ENCODE measurements at regions of chr16 and their contacts with region 1.

Region 1: DNA sequence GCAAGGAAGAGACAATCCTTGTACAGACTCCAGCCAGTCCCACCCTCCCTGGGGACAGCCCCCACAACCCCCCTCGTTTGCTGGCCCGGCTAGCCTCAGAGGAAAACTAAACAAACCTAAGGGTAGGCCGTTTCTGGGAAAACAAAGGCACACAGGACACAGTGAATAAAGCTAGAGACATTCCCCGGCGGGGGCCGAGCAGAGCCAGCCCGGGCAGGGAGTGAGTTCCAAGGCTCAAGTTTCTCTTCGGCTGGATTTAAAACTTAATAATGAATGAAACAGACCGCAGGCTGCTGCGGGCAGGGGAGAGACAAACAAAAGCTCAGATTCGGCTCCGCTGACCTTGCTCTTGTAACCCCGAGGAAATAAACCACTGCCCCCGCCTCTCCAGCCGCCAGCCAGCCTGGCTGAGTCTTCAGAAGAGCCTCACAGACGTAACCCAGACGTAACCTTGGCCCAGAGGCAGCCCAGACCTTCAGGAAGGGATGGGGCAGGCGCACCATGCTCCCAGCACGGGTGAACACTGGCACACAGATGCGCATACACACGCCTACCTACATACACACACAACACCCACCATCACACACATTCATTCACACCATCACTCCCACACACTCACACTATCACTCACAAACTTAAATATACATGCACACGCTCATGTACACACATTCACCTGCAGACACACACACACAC is 216.0 kb downstream of the ZNF423 start:
- DNase-seq: peak; percentile 77
- ATAC-seq: peak; percentile 86
- H3K4me3 ChIP-seq: no peak overlapping the region
- H3K27ac ChIP-seq: peak overlapping the region; percentile 44
- H3K4me1 ChIP-seq: peaks cover 31% of the 10 kb centered on the region
- H3K27me3 ChIP-seq: no peaks in the 10 kb centered on the region
- CTCF ChIP-seq: no peak
- POLR2A ChIP-seq: no peak
- RAD21 ChIP-seq: no peak

Region 2: GRCh38 chr16:49592546-49593423 is 47.1 kb before region 1 on chr16:
- CTCF ChIA-PET with region 1: no interaction called
- POLR2A ChIA-PET with region 1: no interaction called
- dilution Hi-C with region 1: no loop called
- in situ Hi-C with region 1: no loop called
- intact Hi-C with region 1: no loop called
- DNase-seq: peak; percentile 7
- ATAC-seq: peak; percentile 78
- H3K4me3 ChIP-seq: no peak overlapping the region
- H3K27ac ChIP-seq: no peak overlapping the region
- H3K4me1 ChIP-seq: no peaks in the 10 kb centered on the region
- H3K27me3 ChIP-seq: peaks cover 21% of the 10 kb centered on the region
- CTCF ChIP-seq: peak; percentile 55
- POLR2A ChIP-seq: no peak
- RAD21 ChIP-seq: 0 out of 2 replicates have a peak, but pooled peaks have one; percentile 25

Region 3: DNA sequence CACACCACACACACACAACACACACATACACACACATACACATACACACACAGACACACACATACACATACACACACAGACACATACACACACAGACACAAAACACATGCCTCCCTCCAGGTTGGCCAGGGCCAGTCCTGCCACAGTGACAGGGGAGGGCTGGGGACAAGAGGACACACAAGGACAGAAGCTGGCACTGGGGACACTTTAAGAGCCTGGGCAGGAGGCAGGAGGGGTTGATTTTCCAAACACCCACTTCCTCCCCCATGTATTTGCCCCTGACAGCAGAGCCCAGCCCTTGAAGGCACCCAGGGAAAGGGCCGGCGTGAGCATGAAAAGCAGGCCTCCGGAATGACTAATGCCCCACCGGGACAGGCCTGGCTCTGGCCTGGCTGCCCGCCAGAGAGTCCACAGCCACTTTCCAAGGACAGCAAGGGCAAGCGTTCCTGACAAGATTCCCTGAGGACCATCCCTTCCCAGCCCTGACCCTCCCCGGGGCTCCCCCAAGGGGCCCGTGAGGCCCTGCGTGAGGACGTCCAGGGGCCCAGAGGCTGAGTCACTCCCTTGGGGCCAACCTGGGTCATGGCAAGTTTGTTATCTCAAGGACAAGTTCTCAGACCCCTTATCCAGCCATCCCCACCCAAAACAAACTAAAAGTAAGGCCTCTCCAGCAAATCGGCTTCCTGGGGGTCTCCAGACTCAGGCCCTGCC is 19.6 kb before region 1 on chr16:
- CTCF ChIA-PET with region 1: no interaction called
- POLR2A ChIA-PET with region 1: no interaction called
- dilution Hi-C with region 1: no loop called
- in situ Hi-C with region 1: no loop called
- intact Hi-C with region 1: loop called (anchors 2 kb)
- DNase-seq: peak; percentile 53
- ATAC-seq: peak; percentile 83
- H3K4me3 ChIP-seq: no peak overlapping the region
- H3K27ac ChIP-seq: peak overlapping the region; percentile 15; the same call in 1 of the 2 replicates
- H3K4me1 ChIP-seq: peaks cover 16% of the 10 kb centered on the region
- H3K27me3 ChIP-seq: peaks cover under 1% of the 10 kb centered on the region; the same call in 1 of the 2 replicates
- CTCF ChIP-seq: no peak
- POLR2A ChIP-seq: no peak
- RAD21 ChIP-seq: no peak

Region 4: GRCh38 chr16:49876716-49877129 is 236.8 kb after region 1 on chr16:
- CTCF ChIA-PET with region 1: no interaction called
- POLR2A ChIA-PET with region 1: no interaction called
- dilution Hi-C with region 1: no loop called
- in situ Hi-C with region 1: no loop called
- intact Hi-C with region 1: no loop called
- DNase-seq: no peak
- ATAC-seq: peak; percentile 66; the same call in 1 of the 2 replicates
- H3K4me3 ChIP-seq: no peak overlapping the region
- H3K27ac ChIP-seq: no peak overlapping the region
- H3K4me1 ChIP-seq: no peaks in the 10 kb centered on the region
- H3K27me3 ChIP-seq: peaks cover 13% of the 10 kb centered on the region; the same call in 1 of the 2 replicates
- CTCF ChIP-seq: peak; percentile 51
- POLR2A ChIP-seq: no peak
- RAD21 ChIP-seq: peak; percentile 24; the same call in 1 of the 2 replicates

Measured in IMR-90 (cell line).